B cell (primary cell): ENCODE measurements at regions of chr11 and their contacts with region 1.

Region 1: DNA sequence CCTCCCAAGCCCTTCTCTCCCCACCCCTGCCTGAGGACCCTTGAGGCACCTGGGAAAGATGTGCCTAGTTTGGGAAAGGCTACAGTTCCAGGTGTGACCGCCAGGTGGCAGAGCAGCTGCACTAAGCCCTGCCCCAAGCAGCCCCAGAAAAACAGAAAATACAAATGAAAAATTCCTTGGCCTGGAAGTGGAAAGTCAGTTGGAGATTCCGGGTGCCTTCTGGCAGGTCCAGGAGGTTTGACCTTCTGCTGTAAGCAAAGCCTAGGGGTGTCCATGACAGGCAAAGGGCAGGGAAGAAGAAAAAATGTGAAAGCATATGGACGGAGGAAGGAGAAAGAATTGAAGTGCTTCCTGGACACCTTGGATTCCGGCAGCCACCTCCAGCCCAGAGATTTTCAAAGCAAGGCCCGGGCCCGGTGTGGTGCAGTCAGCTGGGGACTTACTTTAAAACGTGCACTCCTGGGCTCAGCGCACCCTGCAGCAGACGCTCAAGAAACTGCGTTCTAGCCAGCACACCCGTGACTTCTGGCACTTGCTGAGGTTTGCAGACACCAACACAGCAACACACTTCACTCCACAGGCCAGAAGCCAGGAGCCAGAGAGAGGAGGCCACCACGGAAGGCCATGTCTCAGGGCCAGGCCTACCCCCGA is 37.3 kb upstream of the SLC22A12 start:
- DNase-seq: peak; percentile 72
- ATAC-seq: peak; percentile 78
- H3K4me3 ChIP-seq: no peak overlapping the region
- H3K4me3 Mint-ChIP-seq: no peak overlapping the region
- H3K27ac ChIP-seq: no peak overlapping the region
- H3K27ac Mint-ChIP-seq: no peak overlapping the region
- H3K4me1 ChIP-seq: peaks cover 12 to 19% of the 10 kb centered on the region in 2 donors
- H3K4me1 Mint-ChIP-seq: peaks cover 7% of the 10 kb centered on the region
- H3K27me3 ChIP-seq: no peaks in the 10 kb centered on the region
- H3K27me3 Mint-ChIP-seq: peaks cover 7% of the 10 kb centered on the region
- CTCF ChIP-seq: peak; percentile 91

Region 2: DNA sequence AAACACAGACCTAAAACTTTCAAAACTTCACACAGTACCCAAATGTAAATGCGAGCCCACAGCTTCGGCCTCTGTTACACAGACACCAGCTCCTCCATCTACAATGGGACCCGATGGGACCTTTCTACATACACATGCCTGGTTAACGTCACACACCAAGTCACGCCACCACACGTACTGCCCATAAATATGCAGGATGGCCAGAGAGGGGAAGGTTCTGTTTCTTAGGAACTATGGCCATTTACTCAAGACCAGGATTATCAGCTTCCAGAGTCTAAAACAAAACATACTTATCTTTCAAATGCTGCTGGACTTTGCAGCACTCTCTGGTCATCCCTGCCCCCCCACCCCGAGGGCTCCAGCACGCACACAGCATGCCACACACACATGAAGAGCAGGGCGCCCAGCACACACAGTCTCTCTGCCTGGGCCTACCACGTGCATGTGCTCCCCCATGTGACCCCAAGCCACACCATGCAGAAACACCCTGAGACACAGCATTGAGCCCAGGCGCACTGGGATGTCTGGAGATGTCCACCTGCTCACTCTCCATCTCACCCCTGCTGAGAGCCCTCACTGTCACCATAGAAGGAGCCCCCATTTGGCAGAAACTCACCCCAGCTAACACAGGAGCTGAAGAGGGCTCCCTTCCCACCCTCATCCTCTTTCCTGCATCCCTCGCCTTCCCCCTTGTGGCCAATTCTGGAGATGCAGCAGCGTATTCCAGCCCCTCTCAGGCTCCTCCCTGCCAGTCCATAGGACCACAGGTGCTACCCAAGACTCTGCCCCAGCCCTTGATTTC is 99.1 kb after region 1 on chr11:
- CTCF ChIA-PET with region 1: interaction called, 4 read pairs
- POLR2A ChIA-PET with region 1: no interaction called
- intact Hi-C with region 1: loop called (anchors 1 kb)
- DNase-seq: peak; percentile 78
- ATAC-seq: peak; percentile 51
- H3K4me3 ChIP-seq: no peak overlapping the region
- H3K4me3 Mint-ChIP-seq: no peak overlapping the region
- H3K27ac ChIP-seq: no peak overlapping the region
- H3K27ac Mint-ChIP-seq: no peak overlapping the region
- H3K4me1 ChIP-seq: peaks cover 17 to 33% of the 10 kb centered on the region in 2 donors
- H3K4me1 Mint-ChIP-seq: peaks cover 28% of the 10 kb centered on the region
- H3K27me3 ChIP-seq: peaks cover 0 to 4% (median 0%) of the 10 kb centered on the region in 4 experiments
- H3K27me3 Mint-ChIP-seq: peaks cover 3% of the 10 kb centered on the region
- CTCF ChIP-seq: peak; percentile 70